ENCODE measurements at regions of chr1 and their contacts with region 1.

Region 1: DNA sequence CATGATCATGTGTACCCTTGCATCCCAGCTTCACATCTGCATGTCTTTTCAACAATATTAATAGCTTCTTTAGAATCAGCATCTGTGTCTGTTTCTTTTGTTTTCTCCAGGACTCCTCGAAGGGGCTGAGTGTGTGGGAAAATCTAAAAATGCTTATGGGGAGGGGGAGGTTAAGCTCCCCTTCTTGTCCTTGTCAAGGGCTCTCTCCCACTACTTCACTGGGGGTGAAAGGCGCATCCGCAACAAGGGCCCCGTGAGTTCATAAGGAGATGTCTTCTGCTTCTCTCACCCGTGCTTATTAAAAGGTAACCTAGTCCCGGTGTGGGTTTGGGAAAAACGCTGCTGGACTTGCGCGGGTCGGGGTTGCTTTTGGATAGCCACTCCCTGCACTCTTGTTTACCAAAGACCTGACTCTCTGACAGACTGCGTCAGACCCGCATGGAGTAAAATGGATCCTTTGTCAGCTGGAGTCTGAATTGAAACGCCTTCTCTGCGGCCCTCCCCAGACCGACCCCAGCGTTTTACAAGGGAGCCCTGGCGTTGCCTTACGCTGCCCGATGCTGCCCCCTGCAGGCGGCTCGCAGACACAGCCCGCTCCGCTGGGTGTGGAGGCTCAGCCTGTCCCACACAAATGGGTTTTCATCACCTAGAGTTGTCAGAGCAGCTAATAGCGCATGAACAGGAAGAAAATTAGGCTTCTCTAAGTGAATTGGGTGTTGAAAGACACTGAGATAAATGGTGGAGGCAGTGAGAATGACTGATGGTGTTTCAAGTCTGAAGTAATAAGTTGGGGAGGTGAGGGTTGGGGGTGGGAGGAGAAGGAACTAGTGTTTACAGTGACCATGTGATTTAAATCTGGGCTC is 53.8 kb downstream of the IER5 start:
- DNase-seq: peak; percentile 81
- H3K4me3 Mint-ChIP-seq: peak overlapping the region; percentile 58
- H3K27ac Mint-ChIP-seq: peak overlapping the region; percentile 84
- H3K4me1 Mint-ChIP-seq: peaks cover 64% of the 10 kb centered on the region
- H3K27me3 Mint-ChIP-seq: peaks cover 18% of the 10 kb centered on the region

Region 2: GRCh38 chr1:180502360-180503273 is 639.7 kb before region 1 on chr1 and contains the start of gene ACBD6:
- intact Hi-C with region 1: loop called (anchors 5 kb)
- DNase-seq: peak; percentile 81
- H3K4me3 Mint-ChIP-seq: peak within 1 kb of the TSS; percentile 97
- H3K27ac Mint-ChIP-seq: peak within 1 kb of the TSS; percentile 97
- H3K4me1 Mint-ChIP-seq: peaks cover 25% of the 10 kb centered on the region
- H3K27me3 Mint-ChIP-seq: peaks cover 3% of the 10 kb centered on the region
- total RNA-seq, gene ACBD6: 49.4 and 50.9 TPM in 2 replicates

Region 3: GRCh38 chr1:180881806-180882509 is 260.4 kb before region 1 on chr1:
- intact Hi-C with region 1: loop called (anchors 1 kb)
- DNase-seq: no peak
- H3K4me3 Mint-ChIP-seq: no peak overlapping the region
- H3K27ac Mint-ChIP-seq: no peak overlapping the region
- H3K4me1 Mint-ChIP-seq: peaks cover 6% of the 10 kb centered on the region
- H3K27me3 Mint-ChIP-seq: no peaks in the 10 kb centered on the region

Region 4: GRCh38 chr1:181021811-181022434 is 120.4 kb before region 1 on chr1:
- intact Hi-C with region 1: loop called (anchors 1 kb)
- DNase-seq: peak; percentile 37
- H3K4me3 Mint-ChIP-seq: peak overlapping the region; percentile 96
- H3K27ac Mint-ChIP-seq: peak overlapping the region; percentile 97
- H3K4me1 Mint-ChIP-seq: peaks cover 46% of the 10 kb centered on the region
- H3K27me3 Mint-ChIP-seq: peaks cover 15% of the 10 kb centered on the region

Region 5: GRCh38 chr1:181062836-181063428 is 79.4 kb before region 1 on chr1:
- intact Hi-C with region 1: loop called (anchors 2 kb)
- DNase-seq: peak; percentile 14
- H3K4me3 Mint-ChIP-seq: peak overlapping the region; percentile 34
- H3K27ac Mint-ChIP-seq: peak overlapping the region; percentile 70
- H3K4me1 Mint-ChIP-seq: peaks cover 25% of the 10 kb centered on the region
- H3K27me3 Mint-ChIP-seq: no peaks in the 10 kb centered on the region

Region 6: GRCh38 chr1:181099152-181100014 is 42.9 kb before region 1 on chr1:
- intact Hi-C with region 1: loop called (anchors 1 kb)
- DNase-seq: peak; percentile 47
- H3K4me3 Mint-ChIP-seq: peak overlapping the region; percentile 75
- H3K27ac Mint-ChIP-seq: peak overlapping the region; percentile 98
- H3K4me1 Mint-ChIP-seq: peaks cover 96% of the 10 kb centered on the region
- H3K27me3 Mint-ChIP-seq: peaks cover 3% of the 10 kb centered on the region

Measured in activated T-helper 1 cell treated with anti-CD3 and anti-CD28 coated beads, Interleukin-12 subunit alpha, Interleukin-12 subunit beta, Interleukin-2, Interleukin-4 antibody, amounts not matched to agents 30 ng/mL and 10 ng/mL and 1 ng/mL, durations not matched to agents 14 hours and 24 hours and 36 hours (primary cell).